HepG2 (cell line): ENCODE measurements at regions of chr1 and their contacts with region 1.

Region 1: GRCh38 chr1:229270547-229271447 is at the start of gene RAB4A:
- DNase-seq: peak; percentile 85
- ATAC-seq: peak; percentile 81
- H3K4me3 ChIP-seq: peak within 1 kb of the TSS; percentile 76 to 86 (median 81)
- H3K27ac ChIP-seq: peak within 1 kb of the TSS; percentile 100
- H3K4me1 ChIP-seq: peaks cover 46% of the 10 kb centered on the region
- H3K27me3 ChIP-seq: peaks cover 0 to 3% of the 10 kb centered on the region in 2 experiments; a peak in 1 of 5 replicates
- CTCF ChIP-seq: no peak
- EP300 ChIP-seq: peak in 1 of 2 experiments; percentile 51; a peak in 1 of 4 replicates
- POLR2A ChIP-seq: peak; percentile 67 to 74
- RAD21 ChIP-seq: 0 out of 2 replicates have a peak, but pooled peaks have one; percentile 24
- total RNA-seq, gene RAB4A: 76.6 and 80.1 TPM in 2 replicates

Region 2: DNA sequence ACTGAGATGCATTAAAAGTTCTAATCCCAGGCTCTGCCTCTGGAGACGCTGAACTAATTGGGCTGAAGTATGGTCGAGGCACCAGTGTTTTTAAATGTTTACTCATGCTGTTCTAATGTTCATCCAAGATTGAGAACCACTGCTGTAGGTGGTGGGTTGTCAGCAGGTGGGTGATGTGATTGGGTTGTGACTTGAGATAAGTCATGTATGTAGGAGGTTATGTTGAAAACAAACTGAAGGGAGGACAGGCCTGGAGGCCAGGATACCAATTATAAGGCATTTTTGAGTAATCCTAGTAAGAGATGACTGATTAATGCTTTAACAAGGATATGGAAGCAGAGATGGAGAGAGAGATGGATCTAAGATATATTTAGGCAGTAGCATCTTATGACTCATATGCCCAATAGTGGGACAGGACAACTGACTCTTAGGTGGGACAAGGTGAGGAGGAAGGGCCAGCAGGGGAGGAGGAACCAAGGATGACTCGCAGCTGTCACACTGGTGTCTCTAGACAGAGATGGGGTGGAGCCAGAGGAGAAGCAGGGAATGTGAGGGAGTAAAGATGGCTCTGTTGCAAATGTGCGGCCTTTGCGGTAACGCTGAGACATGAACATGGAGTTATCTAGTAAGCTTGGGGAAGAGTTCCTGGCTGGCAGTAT is 29.4 kb after region 1 on chr1:
- CTCF ChIA-PET with region 1: no interaction called
- POLR2A ChIA-PET with region 1: interaction called, 39 read pairs
- in situ Hi-C with region 1: no loop called
- intact Hi-C with region 1: loop called (anchors 2 kb)
- DNase-seq: no peak
- ATAC-seq: no peak
- H3K4me3 ChIP-seq: no peak overlapping the region
- H3K27ac ChIP-seq: peak overlapping the region; percentile 91
- H3K4me1 ChIP-seq: peaks cover 53% of the 10 kb centered on the region
- H3K27me3 ChIP-seq: no peaks in the 10 kb centered on the region
- CTCF ChIP-seq: no peak
- EP300 ChIP-seq: no peak
- POLR2A ChIP-seq: no peak
- RAD21 ChIP-seq: no peak